H1 (cell line): ENCODE measurements at regions of chr3 and their contacts with region 1.

Region 1: DNA sequence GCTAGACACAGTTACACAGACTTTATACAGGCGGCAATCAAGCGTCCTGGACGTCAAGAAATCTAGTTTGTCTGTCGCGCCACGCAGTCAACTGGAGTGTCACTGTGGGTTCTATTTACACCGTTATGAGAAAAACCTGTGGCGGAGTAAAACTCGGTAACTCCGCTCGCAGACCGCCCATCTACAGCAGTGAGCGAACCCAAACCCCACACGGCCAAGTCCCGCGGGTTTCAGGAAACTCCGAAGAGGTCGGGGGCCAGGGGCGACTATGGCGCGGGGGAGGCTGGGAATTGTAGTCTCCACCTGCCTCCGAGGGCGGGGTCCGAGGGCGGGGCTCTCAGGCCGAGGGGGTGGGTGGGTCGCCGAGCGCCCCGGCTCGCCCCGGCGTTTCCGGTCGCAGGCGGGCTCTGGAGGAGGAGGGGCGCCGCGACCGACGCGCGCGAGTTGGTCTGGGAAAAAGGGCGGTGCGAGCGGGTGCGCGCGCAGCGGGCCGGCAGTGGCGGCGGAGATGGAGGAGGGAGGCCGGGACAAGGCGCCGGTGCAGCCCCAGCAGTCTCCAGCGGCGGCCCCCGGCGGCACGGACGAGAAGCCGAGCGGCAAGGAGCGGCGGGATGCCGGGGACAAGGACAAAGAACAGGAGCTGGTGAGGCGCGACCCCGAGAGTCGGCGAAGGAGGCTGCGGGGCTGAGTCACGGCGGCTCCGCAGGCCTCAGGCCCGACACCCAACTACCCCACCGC is at the start of gene PSMD2:
- DNase-seq: peak; percentile 80 to 94
- H3K4me3 ChIP-seq: peak within 1 kb of the TSS; percentile 91 to 98 (median 95)
- H3K27ac ChIP-seq: peak within 1 kb of the TSS; percentile 71; the same call in 1 of the 2 replicates
- H3K4me1 ChIP-seq: peaks cover 0 to 7% (median 2%) of the 10 kb centered on the region in 4 experiments; a peak in 4 of 7 replicates
- H3K27me3 ChIP-seq: no peaks in the 10 kb centered on the region
- CTCF ChIP-seq: no peak
- EP300 ChIP-seq: no peak
- POLR2A ChIP-seq: peak; percentile 80 to 83
- RAD21 ChIP-seq: no peak
- total RNA-seq, gene PSMD2: 358 and 363 TPM in 2 replicates

Region 2: DNA sequence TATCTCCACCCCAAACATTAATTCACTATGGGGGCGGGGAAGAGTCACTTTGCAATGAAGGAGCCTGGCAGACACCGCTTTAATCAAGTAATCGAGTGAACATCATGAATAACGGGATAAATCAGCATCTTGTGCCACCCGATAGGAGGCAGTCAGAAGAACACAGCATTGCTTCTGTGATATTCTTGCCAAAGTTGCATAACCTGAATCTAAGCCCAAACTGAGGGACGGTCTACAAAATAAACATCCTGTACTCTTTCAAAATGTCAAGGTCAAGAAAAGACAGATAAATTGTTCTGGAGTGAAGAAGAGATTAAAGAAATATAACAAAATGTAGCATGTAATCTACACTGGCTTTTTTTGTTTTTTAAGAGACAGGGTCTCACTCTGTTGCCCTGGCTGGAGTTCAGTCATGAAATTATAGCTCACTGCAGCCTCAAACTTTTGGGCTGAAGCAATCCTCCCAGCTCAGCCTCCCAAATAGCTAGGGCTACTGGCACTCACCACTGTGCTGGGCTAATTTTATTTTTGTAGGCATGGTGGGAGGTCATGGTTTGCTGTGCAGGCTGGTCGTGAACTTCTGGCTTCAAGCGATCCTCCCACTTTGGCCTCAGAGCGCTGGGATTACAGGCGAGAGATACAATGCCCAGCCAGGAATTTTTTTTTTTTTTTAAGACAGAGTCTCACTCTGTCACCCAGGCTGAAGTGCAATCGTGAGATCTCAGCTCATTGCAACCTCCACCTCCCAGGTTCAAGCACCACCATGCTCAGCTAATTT is 89.6 kb before region 1 on chr3:
- CTCF ChIA-PET with region 1: no interaction called
- POLR2A ChIA-PET with region 1: no interaction called
- DNase-seq: no peak
- H3K4me3 ChIP-seq: no peak overlapping the region
- H3K27ac ChIP-seq: no peak overlapping the region
- H3K4me1 ChIP-seq: no peaks in the 10 kb centered on the region
- H3K27me3 ChIP-seq: no peaks in the 10 kb centered on the region
- CTCF ChIP-seq: no peak
- EP300 ChIP-seq: no peak
- POLR2A ChIP-seq: no peak
- RAD21 ChIP-seq: no peak

Region 3: DNA sequence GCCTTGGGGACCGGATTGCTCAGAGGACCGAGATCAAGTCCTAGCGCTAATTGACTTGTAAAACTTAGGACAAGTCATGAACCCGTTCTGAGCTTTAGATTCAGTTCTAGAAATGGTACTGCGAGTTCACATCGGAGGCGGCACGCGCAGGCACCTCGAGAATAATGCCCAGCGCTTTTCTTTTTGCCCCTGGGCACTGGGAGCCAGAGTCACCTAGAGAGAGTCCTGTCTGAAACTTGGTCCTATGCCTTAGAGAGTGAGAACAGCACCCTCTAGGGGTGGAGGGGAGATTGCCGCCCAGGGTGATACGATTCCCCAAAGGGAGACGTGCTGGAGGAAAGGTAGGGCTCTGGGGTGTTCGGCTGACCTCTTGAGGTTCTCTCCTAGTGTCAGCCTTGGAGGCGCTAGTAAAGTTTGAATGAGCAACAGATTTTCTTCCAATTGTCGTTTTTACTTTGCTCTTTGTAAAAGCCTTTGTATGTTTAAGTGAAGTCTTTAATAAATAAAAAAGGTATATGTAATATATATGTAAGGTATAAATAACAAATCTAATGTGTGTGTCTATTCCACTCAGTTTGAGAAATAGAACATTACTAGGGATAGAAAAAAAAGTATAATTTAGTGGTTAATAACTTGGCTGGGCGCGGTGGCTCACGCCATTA is 48.6 kb before region 1 on chr3:
- CTCF ChIA-PET with region 1: interaction called, 10 read pairs
- POLR2A ChIA-PET with region 1: interaction called, 5 read pairs
- DNase-seq: peak; percentile 94 to 98
- H3K4me3 ChIP-seq: peak overlapping the region; percentile 71 to 89 (median 82)
- H3K27ac ChIP-seq: no peak overlapping the region
- H3K4me1 ChIP-seq: no peaks in the 10 kb centered on the region
- H3K27me3 ChIP-seq: no peaks in the 10 kb centered on the region; a peak in 1 of 7 replicates
- CTCF ChIP-seq: peak; percentile 90 to 97 (median 91)
- EP300 ChIP-seq: no peak
- POLR2A ChIP-seq: no peak
- RAD21 ChIP-seq: peak; percentile 53 to 72

Region 4: GRCh38 chr3:184272269-184272668 is 26.7 kb before region 1 on chr3:
- CTCF ChIA-PET with region 1: no interaction called
- POLR2A ChIA-PET with region 1: no interaction called
- DNase-seq: no peak
- H3K4me3 ChIP-seq: no peak overlapping the region
- H3K27ac ChIP-seq: no peak overlapping the region
- H3K4me1 ChIP-seq: peaks cover 0 to 7% (median 3%) of the 10 kb centered on the region in 4 experiments; a peak in 5 of 7 replicates
- H3K27me3 ChIP-seq: peaks cover 8 to 25% (median 23%) of the 10 kb centered on the region in 4 experiments
- CTCF ChIP-seq: no peak
- EP300 ChIP-seq: no peak
- POLR2A ChIP-seq: no peak
- RAD21 ChIP-seq: no peak

Region 5: GRCh38 chr3:184314363-184314699 is 15.4 kb after region 1 on chr3 and contains the start of gene EIF4G1:
- CTCF ChIA-PET with region 1: interaction called, 4 read pairs
- POLR2A ChIA-PET with region 1: interaction called, 43 read pairs
- DNase-seq: peak; percentile 77 to 92
- H3K4me3 ChIP-seq: peak within 1 kb of the TSS; percentile 44 to 96 (median 77)
- H3K27ac ChIP-seq: peak within 1 kb of the TSS; percentile 82
- H3K4me1 ChIP-seq: peaks cover 3 to 9% (median 6%) of the 10 kb centered on the region in 4 experiments
- H3K27me3 ChIP-seq: no peaks in the 10 kb centered on the region
- CTCF ChIP-seq: no peak
- EP300 ChIP-seq: no peak
- POLR2A ChIP-seq: peak; percentile 83 to 86; a peak in 2 of 3 replicates
- RAD21 ChIP-seq: no peak
- total RNA-seq, gene EIF4G1: 473 and 480 TPM in 2 replicates

Region 6: GRCh38 chr3:184325715-184326369 is 26.9 kb after region 1 on chr3:
- CTCF ChIA-PET with region 1: interaction called, 5 read pairs
- POLR2A ChIA-PET with region 1: interaction called, 27 read pairs
- DNase-seq: no peak
- H3K4me3 ChIP-seq: no peak overlapping the region
- H3K27ac ChIP-seq: no peak overlapping the region
- H3K4me1 ChIP-seq: no peaks in the 10 kb centered on the region
- H3K27me3 ChIP-seq: no peaks in the 10 kb centered on the region
- CTCF ChIP-seq: no peak
- EP300 ChIP-seq: no peak
- POLR2A ChIP-seq: no peak
- RAD21 ChIP-seq: no peak

Region 7: GRCh38 chr3:184375747-184376461 is 77.0 kb after region 1 on chr3:
- CTCF ChIA-PET with region 1: no interaction called
- POLR2A ChIA-PET with region 1: no interaction called
- DNase-seq: no peak
- H3K4me3 ChIP-seq: no peak overlapping the region
- H3K27ac ChIP-seq: no peak overlapping the region
- H3K4me1 ChIP-seq: peaks cover 4 to 34% (median 24%) of the 10 kb centered on the region in 4 experiments
- H3K27me3 ChIP-seq: peaks cover 12 to 25% (median 23%) of the 10 kb centered on the region in 4 experiments
- CTCF ChIP-seq: no peak
- EP300 ChIP-seq: no peak
- POLR2A ChIP-seq: no peak
- RAD21 ChIP-seq: no peak